ENCODE measurements at regions of chr10 and their contacts with region 1.

Region 1: DNA sequence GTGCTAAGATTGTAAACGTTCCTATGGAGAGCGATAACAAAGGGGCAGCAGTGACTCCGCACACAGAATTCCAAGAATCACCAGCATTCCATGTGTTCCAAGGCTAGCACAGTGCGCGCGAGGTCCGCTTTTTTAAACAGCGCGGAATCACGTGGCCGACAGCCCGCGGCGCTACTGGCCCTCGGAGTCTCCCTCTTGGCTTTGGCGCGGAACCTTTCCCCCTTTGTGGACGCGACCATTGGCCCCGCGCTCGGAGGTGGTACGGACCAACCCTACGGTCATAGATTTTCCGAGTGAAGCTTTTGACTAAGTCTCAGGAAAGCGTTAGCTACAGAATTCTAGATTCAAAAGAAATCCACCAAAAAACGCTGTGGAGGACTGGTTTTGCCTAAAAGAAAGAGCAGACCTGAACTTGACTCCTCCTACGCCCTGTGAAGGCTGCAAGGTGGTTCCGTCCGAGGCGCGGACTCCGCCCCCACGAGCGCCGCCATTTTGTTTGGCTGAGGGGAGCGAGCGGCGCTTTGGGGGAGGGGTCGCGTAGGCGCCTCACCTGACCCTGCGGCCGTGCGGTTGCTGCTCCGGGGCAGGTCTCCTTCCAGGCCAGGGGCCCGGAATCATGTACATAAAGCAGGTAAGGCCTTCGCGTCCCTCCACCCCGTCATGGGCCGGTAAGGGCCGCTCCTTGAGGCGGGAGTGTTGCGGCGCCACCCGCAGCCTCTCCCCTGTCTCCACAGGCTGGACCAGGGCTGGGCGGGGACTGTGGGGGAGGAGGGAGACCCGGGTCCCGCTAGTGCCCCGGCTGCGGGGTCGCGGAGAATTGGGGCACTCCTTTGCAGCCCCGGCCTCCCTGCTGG is at the start of gene SMC3:
- DNase-seq: peak; percentile 83 to 95 (median 90)
- ATAC-seq: peak; percentile 89
- H3K4me3 ChIP-seq: peak within 1 kb of the TSS; percentile 92 to 93
- H3K4me3 Mint-ChIP-seq: peak within 1 kb of the TSS; percentile 97
- H3K27ac ChIP-seq: peak within 1 kb of the TSS; percentile 85 to 86
- H3K27ac Mint-ChIP-seq: peak within 1 kb of the TSS; percentile 96
- H3K4me1 ChIP-seq: peaks cover 44% of the 10 kb centered on the region
- H3K4me1 Mint-ChIP-seq: peaks cover 44% of the 10 kb centered on the region
- H3K27me3 ChIP-seq: no peaks in the 10 kb centered on the region
- H3K27me3 Mint-ChIP-seq: peaks cover 12% of the 10 kb centered on the region
- CTCF ChIP-seq: no peak
- total RNA-seq, gene SMC3: 35.1 to 37.9 TPM

Region 2: DNA sequence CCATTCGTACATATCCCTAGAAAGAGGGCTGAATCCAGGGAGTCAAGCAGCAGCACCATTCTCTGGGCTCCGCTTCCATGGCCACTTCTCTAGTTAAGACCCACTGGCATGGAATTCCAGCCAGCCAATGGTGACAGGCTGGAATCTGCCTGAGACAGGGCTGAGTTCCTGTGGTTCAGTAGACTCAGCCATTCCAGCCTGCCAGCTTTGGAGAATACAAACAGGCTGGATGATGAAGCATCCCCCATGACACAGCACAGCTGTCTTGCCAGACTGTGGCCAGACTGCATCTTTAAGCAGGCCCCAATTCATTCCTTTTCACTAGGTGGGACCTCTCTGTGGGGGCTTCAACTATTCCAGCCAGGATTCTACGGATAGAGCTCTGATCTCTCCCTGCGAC is 973.7 kb before region 1 on chr10:
- CTCF ChIA-PET with region 1: no interaction called
- POLR2A ChIA-PET with region 1: no interaction called
- intact Hi-C with region 1: no loop called
- DNase-seq: no peak
- ATAC-seq: no peak
- H3K4me3 ChIP-seq: no peak overlapping the region
- H3K4me3 Mint-ChIP-seq: no peak overlapping the region
- H3K27ac ChIP-seq: no peak overlapping the region
- H3K27ac Mint-ChIP-seq: no peak overlapping the region
- H3K4me1 ChIP-seq: no peaks in the 10 kb centered on the region
- H3K4me1 Mint-ChIP-seq: no peaks in the 10 kb centered on the region
- H3K27me3 ChIP-seq: no peaks in the 10 kb centered on the region
- H3K27me3 Mint-ChIP-seq: peaks cover 2% of the 10 kb centered on the region
- CTCF ChIP-seq: no peak

Region 3: GRCh38 chr10:109740436-109740835 is 827.0 kb before region 1 on chr10:
- CTCF ChIA-PET with region 1: no interaction called
- POLR2A ChIA-PET with region 1: no interaction called
- intact Hi-C with region 1: no loop called
- DNase-seq: no peak
- ATAC-seq: no peak
- H3K4me3 ChIP-seq: no peak overlapping the region
- H3K4me3 Mint-ChIP-seq: no peak overlapping the region
- H3K27ac ChIP-seq: no peak overlapping the region
- H3K27ac Mint-ChIP-seq: no peak overlapping the region
- H3K4me1 ChIP-seq: no peaks in the 10 kb centered on the region
- H3K4me1 Mint-ChIP-seq: no peaks in the 10 kb centered on the region
- H3K27me3 ChIP-seq: no peaks in the 10 kb centered on the region
- H3K27me3 Mint-ChIP-seq: peaks cover 7% of the 10 kb centered on the region
- CTCF ChIP-seq: no peak

Region 4: GRCh38 chr10:109914966-109915365 is 652.5 kb before region 1 on chr10:
- CTCF ChIA-PET with region 1: no interaction called
- POLR2A ChIA-PET with region 1: no interaction called
- intact Hi-C with region 1: loop called in 1 of 2 experiments (anchors 10 kb)
- DNase-seq: peak in 7 of 9 experiments; percentile 25 to 86 (median 55)
- ATAC-seq: peak; percentile 88
- H3K4me3 ChIP-seq: no peak overlapping the region
- H3K4me3 Mint-ChIP-seq: peak overlapping the region; percentile 62
- H3K27ac ChIP-seq: peak overlapping the region in 1 of 2 experiments; percentile 74
- H3K27ac Mint-ChIP-seq: peak overlapping the region; percentile 55
- H3K4me1 ChIP-seq: peaks cover 40% of the 10 kb centered on the region
- H3K4me1 Mint-ChIP-seq: peaks cover 83% of the 10 kb centered on the region
- H3K27me3 ChIP-seq: no peaks in the 10 kb centered on the region
- H3K27me3 Mint-ChIP-seq: no peaks in the 10 kb centered on the region
- CTCF ChIP-seq: no peak

Region 5: DNA sequence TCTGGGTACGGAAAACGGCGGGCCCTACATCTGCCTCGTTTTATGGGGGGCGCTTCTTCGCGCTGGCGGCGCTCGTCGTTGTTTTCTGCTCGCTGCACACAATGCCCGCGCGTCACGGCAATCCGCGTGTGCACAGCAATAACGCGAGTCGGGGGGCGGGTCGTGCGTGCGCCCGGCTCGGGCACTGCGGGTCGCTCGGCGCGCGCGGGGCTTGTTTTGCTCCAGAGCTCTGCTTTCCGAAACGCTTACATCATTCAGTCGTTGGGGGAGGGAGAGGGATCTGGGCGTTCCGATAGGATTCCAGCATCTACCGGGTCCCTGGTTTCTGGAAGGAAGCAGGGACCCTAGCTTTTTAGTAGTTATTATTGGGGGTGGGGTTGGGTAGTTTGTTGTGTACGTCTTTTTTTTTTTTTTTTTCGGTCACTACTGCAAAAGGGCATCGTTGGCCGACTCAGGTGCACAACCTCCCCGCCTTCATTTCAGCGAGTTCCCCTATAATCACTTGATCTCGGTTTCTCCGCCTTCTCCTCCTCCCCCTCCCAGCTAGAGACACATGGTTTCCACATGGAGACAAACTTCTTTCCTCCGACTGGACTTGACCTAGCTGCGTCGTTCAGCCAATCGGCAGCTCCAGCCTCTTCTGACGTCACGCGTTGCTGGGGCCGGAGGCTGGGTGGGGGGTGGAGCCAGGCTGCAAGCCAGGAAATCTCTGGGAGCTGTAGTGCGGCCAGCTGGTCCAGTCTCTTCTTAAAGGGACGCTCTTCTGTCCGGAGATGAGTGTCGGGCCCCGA is 356.6 kb before region 1 on chr10:
- CTCF ChIA-PET with region 1: no interaction called
- POLR2A ChIA-PET with region 1: no interaction called
- intact Hi-C with region 1: loop called in 1 of 2 experiments (anchors 1 kb)
- DNase-seq: peak; percentile 77 to 94 (median 90)
- ATAC-seq: peak; percentile 48
- H3K4me3 ChIP-seq: peak overlapping the region; percentile 59 to 91
- H3K4me3 Mint-ChIP-seq: peak overlapping the region; percentile 94
- H3K27ac ChIP-seq: peak overlapping the region; percentile 60 to 90
- H3K27ac Mint-ChIP-seq: peak overlapping the region; percentile 99
- H3K4me1 ChIP-seq: peaks cover 22% of the 10 kb centered on the region
- H3K4me1 Mint-ChIP-seq: peaks cover 47% of the 10 kb centered on the region
- H3K27me3 ChIP-seq: peaks cover 0 to 13% of the 10 kb centered on the region in 2 experiments
- H3K27me3 Mint-ChIP-seq: peaks cover 17% of the 10 kb centered on the region
- CTCF ChIP-seq: no peak

Region 6: DNA sequence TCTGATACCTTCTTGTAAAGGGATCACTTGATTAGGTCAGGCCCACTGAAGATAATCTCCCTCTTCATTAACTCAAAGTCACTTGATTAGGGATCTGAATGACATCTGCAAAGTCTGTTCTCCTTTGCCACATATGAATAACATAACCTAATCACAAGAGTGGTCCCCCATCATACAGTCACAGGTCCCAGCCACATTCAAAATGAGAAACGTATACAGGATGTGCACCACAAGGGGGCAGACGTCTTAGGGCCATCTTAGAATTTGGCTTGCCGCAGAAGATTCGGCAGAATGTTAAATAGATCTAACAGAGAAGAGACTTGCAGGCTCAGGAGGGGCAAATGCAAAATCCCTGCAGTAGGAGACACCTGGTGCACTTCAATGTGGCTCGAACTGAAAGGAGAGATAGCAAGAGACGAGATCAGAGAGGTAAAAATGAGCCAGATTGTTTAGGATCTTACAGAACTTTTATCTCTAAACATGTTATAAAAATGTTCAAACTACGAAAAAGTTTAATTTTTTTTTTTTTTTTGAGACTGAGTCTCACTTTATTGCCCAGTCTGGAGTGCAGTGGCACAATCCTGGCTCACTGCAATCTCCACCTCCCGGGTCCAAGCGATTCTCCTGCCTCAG is 10.3 kb before region 1 on chr10:
- CTCF ChIA-PET with region 1: interaction called, 4 read pairs
- POLR2A ChIA-PET with region 1: no interaction called
- intact Hi-C with region 1: loop called in 1 of 2 experiments (anchors 1 kb)
- DNase-seq: peak; percentile 37 to 85 (median 71)
- ATAC-seq: peak; percentile 99
- H3K4me3 ChIP-seq: no peak overlapping the region
- H3K4me3 Mint-ChIP-seq: no peak overlapping the region
- H3K27ac ChIP-seq: no peak overlapping the region
- H3K27ac Mint-ChIP-seq: no peak overlapping the region
- H3K4me1 ChIP-seq: no peaks in the 10 kb centered on the region
- H3K4me1 Mint-ChIP-seq: peaks cover 3% of the 10 kb centered on the region
- H3K27me3 ChIP-seq: no peaks in the 10 kb centered on the region
- H3K27me3 Mint-ChIP-seq: peaks cover 6% of the 10 kb centered on the region
- CTCF ChIP-seq: peak; percentile 82

Region 7: DNA sequence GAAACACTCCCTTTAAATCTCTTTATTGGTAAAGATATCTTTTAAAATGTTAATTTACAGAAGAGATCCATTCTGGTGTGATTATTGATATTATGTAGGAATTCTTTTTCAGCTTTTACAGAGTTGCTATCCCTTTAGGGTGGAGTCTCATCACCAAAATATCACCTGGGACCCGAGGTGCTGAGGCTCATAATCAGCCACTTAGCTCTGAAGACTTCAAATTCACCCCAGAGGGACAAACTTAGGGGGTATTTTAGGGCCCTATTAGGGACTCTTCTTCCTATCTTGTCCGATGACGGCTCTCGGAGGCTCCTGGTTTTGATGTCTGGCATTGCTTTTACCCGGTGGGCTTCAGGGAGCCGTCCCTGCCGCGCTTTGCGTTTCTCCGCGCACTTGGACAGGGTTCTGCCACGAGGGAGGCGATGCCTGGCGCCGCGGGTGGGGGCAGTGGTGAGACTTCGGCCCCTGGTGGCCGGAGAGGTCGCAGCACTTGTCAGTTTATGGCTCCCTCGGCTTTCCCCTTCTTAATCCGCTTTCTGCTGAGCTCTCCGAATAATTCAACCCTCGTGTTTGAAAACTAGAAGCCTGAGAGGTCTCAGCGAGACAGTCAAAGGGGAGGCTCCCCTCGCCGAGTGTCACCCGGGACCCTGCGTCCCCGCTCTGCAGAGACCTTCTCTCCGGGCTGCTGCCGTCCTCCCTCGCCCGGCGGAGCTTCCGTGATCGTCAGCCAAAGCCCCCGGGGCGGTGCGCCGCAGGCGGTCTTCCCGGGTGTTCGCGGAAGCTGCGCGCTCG is 104.6 kb after region 1 on chr10:
- CTCF ChIA-PET with region 1: no interaction called
- POLR2A ChIA-PET with region 1: interaction called, 3 read pairs
- intact Hi-C with region 1: loop called in 1 of 2 experiments (anchors 1 kb)
- DNase-seq: peak; percentile 36 to 82 (median 69)
- ATAC-seq: peak; percentile 85
- H3K4me3 ChIP-seq: peak overlapping the region; percentile 66 to 76
- H3K4me3 Mint-ChIP-seq: peak overlapping the region; percentile 91
- H3K27ac ChIP-seq: peak overlapping the region; percentile 55 to 69
- H3K27ac Mint-ChIP-seq: peak overlapping the region; percentile 91
- H3K4me1 ChIP-seq: peaks cover 4% of the 10 kb centered on the region
- H3K4me1 Mint-ChIP-seq: peaks cover 4% of the 10 kb centered on the region
- H3K27me3 ChIP-seq: no peaks in the 10 kb centered on the region
- H3K27me3 Mint-ChIP-seq: no peaks in the 10 kb centered on the region
- CTCF ChIP-seq: peak; percentile 58

Region 8: GRCh38 chr10:112446855-112447711 is 1879.7 kb after region 1 on chr10 and contains the starts of genes VTI1A and ZDHHC6:
- CTCF ChIA-PET with region 1: no interaction called
- POLR2A ChIA-PET with region 1: no interaction called
- intact Hi-C with region 1: loop called in 1 of 2 experiments (anchors 10 kb)
- DNase-seq: peak; percentile 68 to 92 (median 85)
- ATAC-seq: peak; percentile 88
- H3K4me3 ChIP-seq: peak within 1 kb of the TSS; percentile 93 to 96
- H3K4me3 Mint-ChIP-seq: peak within 1 kb of the TSS; percentile 94
- H3K27ac ChIP-seq: peak within 1 kb of the TSS; percentile 91 to 92
- H3K27ac Mint-ChIP-seq: peak within 1 kb of the TSS; percentile 95
- H3K4me1 ChIP-seq: peaks cover 24% of the 10 kb centered on the region
- H3K4me1 Mint-ChIP-seq: peaks cover 66% of the 10 kb centered on the region
- H3K27me3 ChIP-seq: no peaks in the 10 kb centered on the region
- H3K27me3 Mint-ChIP-seq: no peaks in the 10 kb centered on the region
- CTCF ChIP-seq: no peak
- total RNA-seq, gene VTI1A: 59.0 to 62.7 TPM
- total RNA-seq, gene ZDHHC6: 41.4 to 41.7 TPM

Measured in CD8-positive, alpha-beta T cell (primary cell).